ENCODE measurements at regions of chrX and their contacts with region 1.

Region 1: GRCh38 chrX:72276478-72276953 is 532 bp downstream of the RPS4X start:
- DNase-seq: no peak
- ATAC-seq: no peak
- H3K4me3 Mint-ChIP-seq: peak overlapping the region; percentile 88
- H3K27ac Mint-ChIP-seq: peak overlapping the region; percentile 76
- H3K4me1 Mint-ChIP-seq: peaks cover 29% of the 10 kb centered on the region
- H3K27me3 Mint-ChIP-seq: no peaks in the 10 kb centered on the region
- CTCF ChIP-seq: no peak

Region 2: DNA sequence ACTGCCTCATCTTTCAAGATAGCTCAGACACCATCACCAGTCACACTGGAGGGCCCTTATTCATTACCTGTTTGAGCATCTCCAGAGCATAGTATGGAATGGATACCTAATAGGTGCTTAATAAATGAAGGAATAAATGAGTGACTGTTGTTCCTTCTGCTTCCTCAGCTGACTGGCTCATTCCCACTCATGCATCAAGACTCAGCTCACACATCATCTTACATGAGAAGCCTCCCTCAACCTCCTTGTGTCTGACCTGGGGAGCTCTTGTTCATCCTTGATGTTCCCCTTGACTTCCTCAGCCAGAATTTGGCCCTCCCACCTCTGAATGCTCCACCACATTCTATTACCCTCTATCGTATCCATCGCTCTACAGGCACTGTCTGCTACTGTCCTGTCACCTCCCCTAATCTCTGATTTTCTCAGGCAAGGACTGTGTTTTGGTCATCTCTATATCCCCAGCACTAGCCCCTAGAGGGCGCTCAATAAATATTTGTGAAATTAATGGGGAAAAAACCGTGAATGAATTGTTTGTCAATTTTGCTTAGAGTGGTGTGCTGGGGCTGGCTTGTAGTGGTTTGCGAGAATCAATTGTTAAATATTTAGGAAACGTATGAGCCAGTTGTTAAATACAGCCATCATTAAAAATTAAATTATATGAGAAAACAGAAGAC is 277.5 kb before region 1 on chrX:
- CTCF ChIA-PET with region 1: interaction called, 4 read pairs
- POLR2A ChIA-PET with region 1: no interaction called
- intact Hi-C with region 1: loop called (anchors 1 kb)
- DNase-seq: no peak
- ATAC-seq: peak; percentile 60
- H3K4me3 Mint-ChIP-seq: no peak overlapping the region
- H3K27ac Mint-ChIP-seq: no peak overlapping the region
- H3K4me1 Mint-ChIP-seq: no peaks in the 10 kb centered on the region
- H3K27me3 Mint-ChIP-seq: peaks cover 10% of the 10 kb centered on the region
- CTCF ChIP-seq: no peak

Region 3: DNA sequence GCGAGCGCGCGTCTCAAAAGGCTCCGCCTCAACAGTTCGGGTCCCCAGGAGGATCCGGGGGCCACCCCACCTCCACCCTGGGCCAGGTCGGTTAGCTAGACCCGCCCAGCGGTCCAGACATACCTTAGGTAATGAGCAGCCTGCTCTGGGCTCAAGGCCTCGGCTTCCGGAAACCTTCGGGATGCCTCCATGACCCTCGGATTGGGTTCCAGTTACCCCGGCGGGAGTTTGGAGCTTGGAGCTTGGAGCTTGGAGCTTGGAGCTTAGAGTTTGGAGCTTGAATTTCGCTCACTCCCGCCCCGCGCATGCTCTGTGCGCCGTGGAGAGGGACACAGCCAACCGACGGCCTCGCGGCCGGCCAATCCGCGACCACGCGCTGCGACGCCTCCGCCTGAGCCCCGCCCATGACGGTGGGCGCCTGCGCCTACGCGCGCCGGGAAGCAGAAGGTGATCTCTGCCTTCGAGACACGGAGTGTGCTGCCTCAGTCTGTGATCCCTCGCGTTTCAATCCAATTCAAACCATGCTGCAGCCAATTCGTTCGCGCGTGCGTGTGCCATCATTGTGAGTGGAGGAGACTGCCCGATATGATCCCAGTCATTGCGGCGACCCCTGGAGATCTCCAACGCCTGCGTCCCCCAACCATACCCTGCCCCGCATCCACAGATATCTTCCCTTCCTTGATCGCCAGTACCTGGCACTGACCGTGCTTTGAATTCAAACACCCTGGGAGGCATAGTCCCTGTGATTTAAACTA is 37.6 kb before region 1 on chrX and contains the start of gene ERCC6L:
- CTCF ChIA-PET with region 1: no interaction called
- POLR2A ChIA-PET with region 1: interaction called, 16 read pairs
- intact Hi-C with region 1: loop called (anchors 2 kb)
- DNase-seq: peak; percentile 76
- ATAC-seq: peak; percentile 99
- H3K4me3 Mint-ChIP-seq: peak within 1 kb of the TSS; percentile 80
- H3K27ac Mint-ChIP-seq: peak within 1 kb of the TSS; percentile 79
- H3K4me1 Mint-ChIP-seq: peaks cover 3% of the 10 kb centered on the region
- H3K27me3 Mint-ChIP-seq: no peaks in the 10 kb centered on the region
- CTCF ChIP-seq: no peak
- total RNA-seq, gene ERCC6L: 0.91 and 1.1 TPM in 2 replicates

Region 4: DNA sequence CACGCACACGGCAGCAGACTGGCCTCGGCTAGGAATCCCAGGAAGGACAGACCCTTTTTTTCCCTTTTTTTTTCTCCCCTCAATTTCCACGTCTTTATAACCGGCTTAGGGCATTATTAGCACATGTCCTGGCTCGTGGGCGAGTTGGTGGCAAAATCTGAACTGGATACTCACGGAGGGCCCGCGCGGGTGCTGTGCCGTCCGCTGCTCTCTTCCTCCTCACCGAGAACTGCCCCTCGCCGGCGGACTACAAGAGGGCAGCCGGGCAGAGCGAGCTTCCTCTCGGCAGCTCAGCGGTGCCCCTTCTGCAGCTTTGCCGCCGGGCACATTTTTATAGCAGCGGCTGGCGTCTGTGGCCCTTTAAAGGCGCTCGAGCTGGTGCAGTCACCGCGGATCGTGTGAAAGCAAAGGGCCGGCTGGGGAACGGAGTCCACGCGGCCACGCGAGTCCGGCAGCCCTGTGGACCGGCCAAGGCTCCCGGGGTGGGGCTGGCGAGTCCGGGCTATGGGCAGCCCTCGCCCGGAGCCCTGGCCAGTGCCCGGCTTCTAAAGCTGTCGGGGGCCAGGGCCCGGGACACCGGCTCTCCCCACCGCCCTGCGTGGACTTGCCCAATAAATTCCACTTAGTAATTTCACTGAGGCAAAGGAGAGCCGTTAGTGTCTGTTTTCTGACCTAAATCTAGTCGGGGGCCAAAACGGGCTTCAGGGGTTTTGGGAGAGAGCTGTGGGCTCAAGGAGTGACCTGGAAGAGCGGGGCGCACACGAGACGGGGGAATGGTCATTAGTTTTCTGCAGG is 30.5 kb after region 1 on chrX:
- CTCF ChIA-PET with region 1: no interaction called
- POLR2A ChIA-PET with region 1: interaction called, 9 read pairs
- intact Hi-C with region 1: loop called (anchors 1 kb)
- DNase-seq: peak; percentile 21
- ATAC-seq: peak; percentile 67
- H3K4me3 Mint-ChIP-seq: peak overlapping the region; percentile 86
- H3K27ac Mint-ChIP-seq: peak overlapping the region; percentile 46
- H3K4me1 Mint-ChIP-seq: peaks cover 37% of the 10 kb centered on the region
- H3K27me3 Mint-ChIP-seq: peaks cover 26% of the 10 kb centered on the region
- CTCF ChIP-seq: no peak

Measured in activated B cell treated with CpG ODN at 0.5 μM for 24 hours (primary cell).